Colonic mucosa (tissue), 4 donors: ENCODE measurements at regions of chr19 and their contacts with region 1.

Region 1: GRCh38 chr19:18203863-18204393 is at the start of gene RAB3A:
- DNase-seq: peak; percentile 100
- H3K4me3 ChIP-seq: peak within 1 kb of the TSS; percentile 55
- H3K27ac ChIP-seq: peak within 1 kb of the TSS; percentile 92
- H3K4me1 ChIP-seq: peaks cover 5% of the 10 kb centered on the region
- H3K27me3 ChIP-seq: no peaks in the 10 kb centered on the region
- CTCF ChIP-seq: no peak
- total RNA-seq, gene RAB3A: 3.5 to 4.2 TPM

Region 2: DNA sequence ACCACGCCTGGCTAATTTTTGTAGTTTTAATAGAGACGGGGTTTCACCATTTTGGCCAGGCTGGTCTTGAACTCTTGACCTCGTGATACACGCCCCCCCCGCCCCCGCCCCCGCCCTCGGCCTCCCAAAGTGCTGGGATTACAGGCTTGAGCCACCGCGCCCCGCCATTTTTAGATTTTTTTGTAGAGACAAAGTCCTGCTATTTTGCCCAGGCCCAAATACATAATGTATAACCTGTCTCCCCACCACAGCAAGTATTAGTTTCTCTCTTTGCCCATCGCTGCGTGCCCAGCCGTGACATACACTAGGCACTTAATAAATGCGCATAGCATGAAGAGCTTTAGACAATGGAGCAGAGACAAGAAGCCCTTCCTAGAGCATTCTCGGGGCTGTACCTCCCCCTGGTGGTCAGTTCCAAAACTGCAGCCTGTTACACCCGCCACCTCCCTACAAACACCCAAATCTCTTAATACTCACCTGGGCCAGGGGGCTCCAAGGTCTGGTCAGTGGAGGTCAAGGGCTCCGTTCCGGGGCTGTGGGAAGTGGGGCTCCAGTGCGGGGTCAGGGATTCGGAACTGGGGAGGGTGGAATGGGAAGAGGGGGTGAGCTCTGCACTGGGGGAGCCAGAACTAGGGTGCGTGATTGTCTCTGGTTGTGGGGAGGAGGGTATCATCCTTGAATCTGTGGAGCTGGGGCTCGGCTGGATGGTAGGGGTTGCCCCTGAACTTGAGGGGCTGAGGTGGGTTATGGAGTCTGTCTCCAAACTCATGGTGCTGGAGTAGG is 47.9 kb after region 1 on chr19:
- intact Hi-C with region 1: loop called (anchors 5 kb)
- DNase-seq: peak; percentile 85
- H3K4me3 ChIP-seq: no peak overlapping the region
- H3K27ac ChIP-seq: no peak overlapping the region
- H3K4me1 ChIP-seq: peaks cover 7% of the 10 kb centered on the region
- H3K27me3 ChIP-seq: no peaks in the 10 kb centered on the region
- CTCF ChIP-seq: peak; percentile 93

Region 3: GRCh38 chr19:18419195-18419698 is 215.3 kb after region 1 on chr19 and contains the start of gene SSBP4:
- intact Hi-C with region 1: loop called (anchors 10 kb)
- DNase-seq: peak; percentile 74
- H3K4me3 ChIP-seq: peak within 1 kb of the TSS; percentile 73
- H3K27ac ChIP-seq: peak within 1 kb of the TSS; percentile 79
- H3K4me1 ChIP-seq: peaks cover 28% of the 10 kb centered on the region
- H3K27me3 ChIP-seq: peaks cover 13% of the 10 kb centered on the region
- CTCF ChIP-seq: no peak
- total RNA-seq, gene SSBP4: 40.1 to 77.3 TPM